Common myeloid progenitor, CD34-positive (primary cell): ENCODE measurements at regions of chr22 and their contacts with region 1.

Region 1: GRCh38 chr22:39532215-39533071 is at the start of gene RPS19BP1:
- DNase-seq: peak; percentile 100
- H3K4me3 ChIP-seq: peak within 1 kb of the TSS; percentile 75 to 96 (median 83)
- H3K27ac ChIP-seq: peak within 1 kb of the TSS; percentile 81 to 93
- H3K4me1 ChIP-seq: peaks cover 12 to 61% (median 55%) of the 10 kb centered on the region in 4 experiments
- H3K27me3 ChIP-seq: peaks cover 0 to under 1% (median 0%) of the 10 kb centered on the region in 5 experiments

Region 2: DNA sequence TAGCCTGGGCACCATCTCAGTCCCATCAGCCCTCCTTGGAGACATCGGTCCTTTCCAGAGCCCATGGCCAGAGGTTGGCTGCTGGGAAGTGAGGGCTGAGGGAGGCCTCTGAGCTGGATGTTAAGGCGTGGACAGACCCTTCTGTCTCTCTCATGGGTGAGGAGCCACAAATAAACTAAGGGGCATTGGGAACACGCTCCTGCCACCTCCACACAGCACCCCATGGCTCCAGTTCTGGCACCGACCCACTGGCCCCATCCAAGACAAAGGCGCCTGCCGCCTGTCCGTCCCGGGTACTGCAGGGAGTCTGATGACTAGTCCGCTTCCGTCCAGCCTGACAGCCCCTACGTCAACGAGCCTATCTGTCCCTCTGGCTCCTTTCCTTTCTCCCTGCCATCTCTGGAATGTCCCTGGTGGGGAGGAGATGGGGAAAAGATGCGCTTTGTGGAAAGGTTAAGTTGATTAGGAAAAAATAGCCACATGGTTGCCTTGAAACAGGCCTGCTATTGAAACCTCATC is 298.1 kb before region 1 on chr22:
- CTCF ChIA-PET with region 1: no interaction called
- POLR2A ChIA-PET with region 1: no interaction called
- DNase-seq: peak in 1 of 3 donors; percentile 44
- H3K4me3 ChIP-seq: peak overlapping the region in 2 of 7 experiments; percentile 0 to 4
- H3K27ac ChIP-seq: no peak overlapping the region
- H3K4me1 ChIP-seq: peaks cover 4 to 60% (median 41%) of the 10 kb centered on the region in 4 experiments
- H3K27me3 ChIP-seq: peaks cover 0 to 95% (median 53%) of the 10 kb centered on the region in 5 experiments

Region 3: DNA sequence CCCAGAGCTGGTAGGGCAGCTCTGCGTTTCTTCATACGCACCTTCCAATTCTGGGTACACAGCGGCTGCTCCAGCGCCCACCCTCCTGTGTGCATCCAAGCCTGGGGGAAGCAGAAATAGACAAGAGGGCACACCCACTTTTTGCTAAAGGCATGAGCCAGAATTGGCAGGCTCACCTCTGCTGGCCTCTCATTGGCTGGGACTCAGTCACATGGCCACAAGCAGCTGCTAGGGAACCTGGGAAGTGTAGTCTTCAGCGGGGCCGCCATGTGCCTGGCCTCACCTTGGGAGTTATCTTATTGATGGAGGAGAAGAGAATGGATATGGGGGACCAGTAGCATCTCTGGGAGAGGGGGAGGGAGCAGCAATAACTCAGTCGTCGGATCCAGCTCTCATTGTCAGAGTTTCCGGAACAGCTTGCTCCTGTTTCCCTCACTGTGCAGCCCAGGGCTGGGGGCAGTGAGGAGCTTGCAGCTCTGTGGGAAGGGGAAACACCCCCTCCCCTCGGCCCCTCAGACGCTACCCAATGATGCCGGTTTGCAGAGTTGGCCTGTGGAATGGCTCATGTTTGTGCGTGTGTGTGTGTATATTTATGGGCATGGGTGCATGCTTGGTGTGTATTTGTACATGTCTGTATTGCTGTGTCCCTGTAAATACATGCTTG is 42.2 kb before region 1 on chr22:
- CTCF ChIA-PET with region 1: interaction called, 243 read pairs
- POLR2A ChIA-PET with region 1: interaction called, 3 read pairs
- DNase-seq: peak; percentile 74 to 91 (median 90)
- H3K4me3 ChIP-seq: peak overlapping the region in 4 of 7 experiments; percentile 3 to 29 (median 24)
- H3K27ac ChIP-seq: no peak overlapping the region
- H3K4me1 ChIP-seq: peaks cover 0 to 24% (median 6%) of the 10 kb centered on the region in 4 experiments
- H3K27me3 ChIP-seq: no peaks in the 10 kb centered on the region

Region 4: DNA sequence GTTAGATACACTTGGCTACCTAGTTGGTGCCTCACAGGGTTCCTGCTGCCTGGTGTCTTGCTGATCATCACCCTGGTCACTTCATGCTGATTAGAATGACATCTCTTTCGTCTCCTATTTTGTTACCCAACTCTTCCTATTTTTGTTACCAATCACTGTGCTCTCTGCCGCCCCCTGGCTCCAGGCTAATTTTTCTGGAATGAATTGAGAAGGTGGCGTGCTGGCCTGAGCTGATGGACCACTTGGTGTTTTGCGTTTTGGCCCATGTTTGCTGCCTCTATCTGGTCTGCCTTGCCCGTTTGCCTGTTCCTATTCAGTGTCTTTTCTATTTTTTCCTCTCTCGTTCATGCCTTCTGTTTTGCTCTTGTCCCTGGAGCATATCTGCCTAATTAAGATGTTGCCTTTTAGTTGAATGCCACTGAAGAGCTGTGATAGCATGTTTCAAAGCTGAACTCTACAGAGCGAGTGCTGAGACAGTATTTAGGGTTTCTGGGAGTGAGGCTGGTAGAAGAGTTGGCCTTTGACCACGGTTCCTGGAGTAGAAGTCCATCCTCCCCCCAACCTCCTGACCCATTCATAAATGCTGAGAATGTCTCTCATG is 18.0 kb before region 1 on chr22:
- CTCF ChIA-PET with region 1: interaction called, 48 read pairs
- POLR2A ChIA-PET with region 1: interaction called, 17 read pairs
- DNase-seq: peak in 2 of 3 donors; percentile 53 to 67
- H3K4me3 ChIP-seq: no peak overlapping the region
- H3K27ac ChIP-seq: no peak overlapping the region
- H3K4me1 ChIP-seq: peaks cover 5 to 17% (median 15%) of the 10 kb centered on the region in 4 experiments
- H3K27me3 ChIP-seq: no peaks in the 10 kb centered on the region

Region 5: DNA sequence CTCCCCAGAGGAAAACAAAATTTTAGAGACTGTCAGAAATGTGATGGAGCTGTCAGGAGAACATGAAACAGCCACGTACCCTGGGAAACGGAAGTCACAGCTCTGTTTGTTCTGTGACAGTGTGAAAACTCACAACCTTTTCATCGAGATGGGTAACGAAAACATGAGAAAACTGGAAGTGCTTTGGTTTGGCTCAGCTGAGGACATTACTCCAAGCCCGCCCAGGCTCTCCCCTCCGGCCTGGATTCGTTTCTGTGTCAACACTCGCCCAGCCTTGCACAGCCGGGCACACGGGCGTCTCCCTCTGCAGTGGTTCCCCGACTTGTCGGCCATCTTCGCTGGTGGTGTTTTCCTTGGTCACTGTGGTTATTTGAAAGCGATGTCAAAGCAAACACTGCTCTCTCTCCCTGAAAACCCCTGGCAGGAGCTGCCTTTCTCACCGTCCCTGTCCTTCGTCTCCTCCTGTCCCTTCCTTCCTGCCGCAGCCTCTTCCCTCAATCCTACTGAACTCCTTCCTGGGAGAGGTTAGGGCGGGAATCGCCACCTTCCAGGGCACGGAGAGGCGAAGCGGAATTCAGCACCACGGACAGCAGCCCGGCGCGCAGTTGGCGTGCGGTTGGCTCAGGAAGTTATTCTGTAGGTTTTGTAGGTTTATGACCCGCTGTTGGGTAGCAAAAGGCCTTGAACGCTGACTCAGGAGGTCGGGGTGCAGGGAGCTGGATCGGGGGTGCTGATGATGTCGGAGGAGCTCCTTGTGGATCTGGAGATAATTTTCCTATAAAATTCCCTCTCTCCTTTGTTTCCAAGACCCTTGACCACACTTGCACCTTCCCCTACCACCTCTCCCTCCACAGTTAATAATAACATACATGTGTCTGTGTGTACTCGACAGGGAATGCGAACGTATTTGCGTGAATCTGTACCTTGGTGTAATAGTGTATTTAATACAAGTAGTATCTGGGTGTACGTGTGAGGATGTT is 13.2 kb after region 1 on chr22:
- CTCF ChIA-PET with region 1: interaction called, 11 read pairs
- POLR2A ChIA-PET with region 1: no interaction called
- DNase-seq: peak in 2 of 3 donors; percentile 71 to 75
- H3K4me3 ChIP-seq: no peak overlapping the region
- H3K27ac ChIP-seq: no peak overlapping the region
- H3K4me1 ChIP-seq: peaks cover 0 to 5% (median 0%) of the 10 kb centered on the region in 4 experiments
- H3K27me3 ChIP-seq: peaks cover 3 to 62% (median 14%) of the 10 kb centered on the region in 5 experiments

Region 6: DNA sequence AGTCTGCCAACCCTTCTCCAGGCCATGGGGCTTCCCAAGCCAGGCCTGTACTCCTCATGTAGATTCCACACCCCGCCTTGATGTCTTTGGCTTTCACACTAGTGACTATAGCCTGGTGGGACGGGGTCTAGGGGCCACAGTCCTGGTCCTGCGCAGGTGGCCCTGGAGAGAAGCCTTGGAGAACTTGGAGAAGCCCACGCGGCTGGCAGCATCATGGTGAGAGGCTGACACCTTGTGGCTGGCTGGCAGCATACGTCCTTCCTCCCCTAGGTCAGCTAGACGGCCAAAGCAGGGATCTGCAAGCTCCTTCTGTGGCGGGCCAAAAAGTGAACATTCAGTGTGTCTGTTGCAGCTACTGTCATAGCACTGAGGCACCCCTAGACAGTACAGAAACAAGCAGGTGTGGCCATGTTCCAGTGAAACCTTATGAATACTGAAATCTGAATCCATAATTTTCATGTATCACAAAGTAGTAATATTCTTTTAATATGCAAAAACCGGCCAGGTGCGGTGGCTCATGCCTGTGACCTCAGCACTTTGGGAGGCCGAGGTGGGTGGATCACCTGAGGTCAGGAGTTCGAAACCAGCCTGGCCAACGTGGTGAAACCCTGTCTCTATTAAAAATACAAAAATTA is 504.3 kb after region 1 on chr22:
- CTCF ChIA-PET with region 1: interaction called, 30 read pairs
- POLR2A ChIA-PET with region 1: no interaction called
- DNase-seq: peak; percentile 79 to 84 (median 80)
- H3K4me3 ChIP-seq: no peak overlapping the region
- H3K27ac ChIP-seq: no peak overlapping the region
- H3K4me1 ChIP-seq: peaks cover 6 to 40% (median 24%) of the 10 kb centered on the region in 4 experiments
- H3K27me3 ChIP-seq: no peaks in the 10 kb centered on the region